ENCODE measurements at regions of chr2 and their contacts with region 1.

Region 1: DNA sequence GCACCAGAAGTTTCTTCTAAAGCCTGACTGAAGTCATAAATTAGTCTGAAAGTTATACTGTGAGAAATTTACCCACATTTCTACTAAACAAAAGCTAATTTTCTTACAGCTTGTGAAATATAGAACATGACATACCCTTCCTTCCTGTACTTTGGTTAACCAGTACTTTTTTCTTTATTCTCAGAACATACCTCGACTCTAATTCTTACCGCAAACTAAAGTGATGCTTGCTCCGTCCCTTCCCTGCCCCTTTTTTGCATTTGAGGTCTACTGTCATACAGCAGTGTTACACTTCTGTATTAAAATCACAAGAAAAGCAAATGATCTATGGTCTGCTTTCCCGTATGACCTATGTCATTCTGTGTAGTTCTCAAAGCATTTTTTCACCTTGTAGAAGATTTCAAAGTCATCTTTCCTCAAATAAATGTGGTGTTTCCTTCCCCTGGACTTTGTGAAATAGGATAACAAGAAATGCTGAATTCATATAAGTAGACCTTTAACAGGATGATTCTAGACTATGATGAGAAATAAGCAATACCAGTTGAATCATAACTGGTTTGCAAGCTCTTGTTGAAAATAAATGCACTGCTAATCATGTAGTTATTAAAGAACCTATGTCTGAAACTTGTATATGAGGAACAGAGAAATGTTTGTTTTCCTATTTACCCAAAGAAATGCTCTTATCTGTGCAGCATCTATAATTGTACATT is 30.4 kb downstream of the CYTIP start:
- DNase-seq: peak; percentile 69
- H3K4me3 Mint-ChIP-seq: peak overlapping the region; percentile 63
- H3K27ac Mint-ChIP-seq: peak overlapping the region; percentile 89
- H3K4me1 Mint-ChIP-seq: peaks cover 79% of the 10 kb centered on the region
- H3K27me3 Mint-ChIP-seq: no peaks in the 10 kb centered on the region

Region 2: DNA sequence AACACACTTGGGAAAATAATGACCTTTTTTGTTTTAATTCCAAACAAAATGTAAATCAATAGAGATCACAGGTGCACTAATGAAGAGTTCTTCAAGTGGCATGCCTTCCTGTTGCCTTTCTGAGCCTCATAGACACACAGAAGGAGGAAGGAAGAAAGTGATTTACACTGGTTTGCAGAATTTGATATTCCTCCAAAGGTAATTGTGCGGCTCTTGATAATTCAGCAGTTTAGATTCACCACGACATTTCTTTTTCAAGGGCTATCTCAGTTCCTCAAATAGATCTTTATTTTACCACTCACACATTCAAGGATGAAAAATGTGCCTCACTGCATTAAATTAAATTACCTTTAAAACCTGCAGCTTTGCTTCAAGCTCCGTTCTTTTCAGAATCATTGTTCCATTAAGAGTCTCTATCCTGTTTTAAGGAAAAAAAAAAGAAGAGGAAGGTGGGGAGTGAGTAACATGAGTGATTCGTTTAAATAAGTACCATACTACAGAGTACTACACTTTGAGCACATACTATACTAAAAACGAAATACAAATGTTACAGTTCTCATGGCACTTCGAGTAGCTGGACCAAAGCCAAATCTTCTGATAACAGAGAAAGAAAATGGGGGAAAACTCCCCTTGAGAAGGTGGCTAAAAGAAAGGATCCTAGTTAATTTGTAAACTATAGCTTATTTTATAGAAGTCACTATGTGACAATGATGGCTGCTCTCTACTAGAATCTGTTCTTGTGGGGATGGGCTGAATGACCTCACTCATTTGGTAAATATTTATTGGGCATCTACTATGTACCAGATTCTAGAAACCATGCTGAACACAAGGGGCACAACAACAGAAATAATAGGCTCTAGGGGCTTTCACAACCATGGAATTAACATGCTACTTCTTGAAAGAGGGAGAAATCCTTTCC is 13.8 kb after region 1 on chr2:
- CTCF ChIA-PET with region 1: interaction called, 3 read pairs
- POLR2A ChIA-PET with region 1: interaction called, 797 read pairs
- DNase-seq: no peak
- H3K4me3 Mint-ChIP-seq: no peak overlapping the region
- H3K27ac Mint-ChIP-seq: peak overlapping the region; percentile 69
- H3K4me1 Mint-ChIP-seq: peaks cover 82% of the 10 kb centered on the region
- H3K27me3 Mint-ChIP-seq: no peaks in the 10 kb centered on the region

Region 3: DNA sequence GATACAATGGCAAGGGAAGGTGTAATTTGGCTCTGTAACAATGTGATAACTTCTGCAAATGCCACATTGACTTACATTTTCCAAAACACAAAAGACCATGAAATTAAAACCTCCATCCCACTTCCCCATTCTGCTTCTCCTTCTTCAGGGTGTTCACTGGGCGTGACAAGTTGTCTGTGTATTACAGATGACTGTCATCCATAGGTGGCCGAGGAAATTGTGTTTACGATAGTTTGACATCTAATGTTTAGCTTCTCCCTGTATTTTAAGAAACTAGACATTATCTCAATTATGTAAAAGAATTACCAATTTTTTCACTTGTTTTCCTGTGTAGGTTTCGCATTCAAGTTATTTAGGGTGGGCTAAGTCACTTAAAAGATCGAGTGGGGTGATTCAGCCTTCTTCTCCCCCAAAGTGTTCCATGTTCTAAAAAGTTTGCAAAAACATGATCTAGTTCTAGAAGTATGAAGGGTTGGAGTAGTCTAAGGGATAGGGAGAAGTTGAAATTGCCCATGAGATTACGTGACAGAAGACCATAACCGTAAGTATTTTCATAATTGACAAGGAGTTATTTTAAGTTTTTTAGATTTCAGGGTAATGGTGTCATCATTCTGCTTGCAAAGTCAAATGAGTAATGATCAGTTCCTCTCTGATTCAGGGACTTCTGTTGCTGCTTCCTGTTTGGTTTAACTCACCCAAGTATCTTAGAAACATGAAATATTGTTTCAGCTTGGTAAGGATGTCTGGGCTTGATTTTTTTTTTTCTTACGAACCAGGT is 55.6 kb after region 1 on chr2:
- CTCF ChIA-PET with region 1: interaction called, 3 read pairs
- POLR2A ChIA-PET with region 1: interaction called, 28 read pairs
- DNase-seq: no peak
- H3K4me3 Mint-ChIP-seq: peak overlapping the region; percentile 72
- H3K27ac Mint-ChIP-seq: peak overlapping the region; percentile 99
- H3K4me1 Mint-ChIP-seq: peaks cover 92% of the 10 kb centered on the region
- H3K27me3 Mint-ChIP-seq: no peaks in the 10 kb centered on the region

Region 4: DNA sequence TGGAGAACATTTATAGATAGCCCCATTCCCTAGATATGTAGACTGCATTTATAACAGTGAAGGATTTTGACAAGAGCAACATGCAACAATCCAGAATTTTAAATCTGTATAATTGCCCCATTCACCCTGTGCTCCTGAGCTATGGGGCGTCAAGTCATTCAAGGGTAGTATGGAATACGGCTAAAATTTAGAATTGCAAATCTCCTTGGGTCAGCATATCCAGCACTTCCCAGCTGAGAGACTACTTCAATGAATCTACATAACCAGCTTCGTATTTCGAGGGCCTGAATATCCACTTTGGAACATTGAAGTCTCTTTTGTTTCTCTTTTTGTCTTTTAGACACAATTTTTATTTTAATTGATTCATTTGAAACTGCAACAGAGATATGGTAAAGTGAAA is 243.6 kb after region 1 on chr2:
- CTCF ChIA-PET with region 1: no interaction called
- POLR2A ChIA-PET with region 1: no interaction called
- DNase-seq: no peak
- H3K4me3 Mint-ChIP-seq: no peak overlapping the region
- H3K27ac Mint-ChIP-seq: no peak overlapping the region
- H3K4me1 Mint-ChIP-seq: no peaks in the 10 kb centered on the region
- H3K27me3 Mint-ChIP-seq: no peaks in the 10 kb centered on the region

Region 5: GRCh38 chr2:157898591-157898996 is 485.1 kb after region 1 on chr2:
- CTCF ChIA-PET with region 1: no interaction called
- POLR2A ChIA-PET with region 1: interaction called, 15 read pairs
- DNase-seq: peak; percentile 61
- H3K4me3 Mint-ChIP-seq: peak overlapping the region; percentile 81
- H3K27ac Mint-ChIP-seq: peak overlapping the region; percentile 99
- H3K4me1 Mint-ChIP-seq: peaks cover 80% of the 10 kb centered on the region
- H3K27me3 Mint-ChIP-seq: no peaks in the 10 kb centered on the region

Region 6: GRCh38 chr2:158091647-158092046 is 678.2 kb after region 1 on chr2:
- CTCF ChIA-PET with region 1: no interaction called
- POLR2A ChIA-PET with region 1: no interaction called
- DNase-seq: no peak
- H3K4me3 Mint-ChIP-seq: no peak overlapping the region
- H3K27ac Mint-ChIP-seq: no peak overlapping the region
- H3K4me1 Mint-ChIP-seq: no peaks in the 10 kb centered on the region
- H3K27me3 Mint-ChIP-seq: no peaks in the 10 kb centered on the region

Measured in activated CD4-positive, alpha-beta memory T cell treated with anti-CD3 and anti-CD28 coated beads, Interleukin-2, amount 10 ng/mL, durations not matched to agents 7 days and 5 days (primary cell).